Activated T-helper 1 cell treated with anti-CD3 and anti-CD28 coated beads, Interleukin-12 subunit alpha, Interleukin-12 subunit beta, Interleukin-2, Interleukin-4 antibody, amounts not matched to agents 30 ng/mL and 10 ng/mL and 1 ng/mL, durations not matched to agents 14 hours and 24 hours and 36 hours (primary cell): ENCODE measurements at regions of chr22 and their contacts with region 1.

Region 1: GRCh38 chr22:21001560-21002325 is at the start of gene THAP7:
- DNase-seq: peak; percentile 92
- H3K4me3 Mint-ChIP-seq: peak within 1 kb of the TSS; percentile 89
- H3K27ac Mint-ChIP-seq: peak within 1 kb of the TSS; percentile 99
- H3K4me1 Mint-ChIP-seq: peaks cover 8% of the 10 kb centered on the region
- H3K27me3 Mint-ChIP-seq: no peaks in the 10 kb centered on the region
- total RNA-seq, gene THAP7: 35.1 and 36.8 TPM in 2 replicates

Region 2: DNA sequence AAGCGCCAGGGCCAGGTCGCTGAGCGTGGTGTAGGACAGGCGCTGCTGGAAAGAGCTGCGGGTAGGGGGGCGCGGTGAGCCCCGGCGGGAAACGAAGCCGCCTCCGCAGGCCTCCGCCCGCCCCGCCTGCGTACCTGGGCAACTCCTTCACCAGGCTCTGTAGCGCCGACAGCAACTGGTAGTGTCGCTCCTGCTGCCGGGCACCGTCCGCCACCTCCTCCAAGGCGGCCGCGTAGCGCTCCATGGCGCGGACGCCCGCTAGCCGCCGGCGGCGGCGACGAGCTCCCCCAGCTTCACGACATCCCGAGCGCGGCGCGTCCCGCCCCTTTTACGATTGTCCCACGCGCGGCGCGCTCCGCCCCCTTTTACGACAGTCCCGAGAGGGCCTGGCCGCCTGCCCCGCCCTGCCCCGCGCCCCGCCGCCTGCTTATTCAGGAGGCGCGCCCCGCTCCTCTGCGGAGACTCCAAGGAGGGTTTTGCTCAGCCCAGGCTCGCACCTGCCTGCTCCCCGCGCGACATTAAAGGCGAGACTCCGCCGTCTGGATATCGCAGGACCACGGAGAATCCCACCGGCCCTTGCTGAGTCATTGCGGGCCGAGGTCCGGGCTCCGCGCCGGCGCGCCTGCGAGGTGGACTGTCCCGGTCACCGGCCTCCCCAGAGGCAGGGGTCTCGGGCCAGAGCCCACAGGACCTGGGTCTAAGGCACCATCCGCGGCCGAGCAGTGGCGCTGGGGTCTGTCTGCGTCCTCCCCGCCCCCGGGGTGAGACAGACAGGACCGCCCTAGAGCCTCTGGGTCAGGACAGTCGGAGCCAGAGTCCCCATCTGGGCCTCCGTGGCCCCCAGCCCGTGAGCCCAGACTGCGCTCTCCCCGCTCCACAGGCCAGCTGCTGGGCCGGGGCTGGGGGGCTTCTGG is 681.7 kb before region 1 on chr22 and contains the start of gene DGCR6L:
- intact Hi-C with region 1: loop called (anchors 5 kb)
- DNase-seq: peak; percentile 97
- H3K4me3 Mint-ChIP-seq: peak within 1 kb of the TSS; percentile 92
- H3K27ac Mint-ChIP-seq: peak within 1 kb of the TSS; percentile 86
- H3K4me1 Mint-ChIP-seq: peaks cover 62% of the 10 kb centered on the region
- H3K27me3 Mint-ChIP-seq: no peaks in the 10 kb centered on the region
- total RNA-seq, gene DGCR6L: 35.5 and 40.6 TPM in 2 replicates

Region 3: DNA sequence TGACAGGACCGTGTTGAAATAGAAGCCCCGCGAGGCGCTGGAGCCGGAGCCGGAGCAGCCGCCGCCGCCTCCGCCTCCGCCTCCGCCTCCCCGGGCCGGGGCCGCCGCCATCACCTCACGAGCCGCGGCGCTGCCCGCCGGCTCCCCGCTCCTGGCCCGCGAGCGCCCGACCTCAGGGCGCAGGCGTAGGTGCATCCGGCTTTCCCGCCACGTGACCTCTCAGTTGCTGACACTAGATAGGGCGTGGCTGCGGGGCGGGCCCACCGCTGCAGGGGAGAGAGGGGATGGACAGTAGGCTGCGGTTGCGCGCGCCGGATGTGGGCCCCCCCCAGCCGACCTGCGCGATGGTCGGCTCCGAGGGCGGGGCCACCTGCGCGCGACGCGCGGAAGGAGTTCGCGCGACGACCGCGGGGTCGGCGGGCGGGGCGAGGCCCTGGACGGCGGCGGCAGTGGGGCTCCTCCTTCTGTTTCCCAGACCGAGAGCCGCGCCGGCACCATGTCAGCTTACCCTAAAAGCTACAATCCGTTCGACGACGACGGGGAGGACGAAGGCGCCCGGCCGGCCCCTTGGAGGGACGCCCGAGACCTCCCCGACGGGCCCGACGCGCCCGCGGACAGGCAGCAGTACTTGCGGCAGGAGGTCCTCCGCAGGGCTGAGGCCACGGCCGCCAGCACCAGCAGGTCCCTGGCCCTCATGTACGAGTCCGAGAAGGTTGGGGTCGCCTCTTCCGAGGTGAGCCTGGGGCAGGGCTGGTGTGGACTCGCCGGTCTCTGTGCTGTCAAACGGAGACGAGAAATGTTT is 142.9 kb before region 1 on chr22 and contains the starts of genes PI4KA and SNAP29:
- intact Hi-C with region 1: loop called (anchors 1 kb)
- DNase-seq: peak; percentile 97
- H3K4me3 Mint-ChIP-seq: peak within 1 kb of the TSS; percentile 85
- H3K27ac Mint-ChIP-seq: peak within 1 kb of the TSS; percentile 88
- H3K4me1 Mint-ChIP-seq: peaks cover 51% of the 10 kb centered on the region
- H3K27me3 Mint-ChIP-seq: peaks cover 2% of the 10 kb centered on the region
- total RNA-seq, gene PI4KA: 80.4 and 84.7 TPM in 2 replicates
- total RNA-seq, gene SNAP29: 24.6 and 27.7 TPM in 2 replicates

Region 4: DNA sequence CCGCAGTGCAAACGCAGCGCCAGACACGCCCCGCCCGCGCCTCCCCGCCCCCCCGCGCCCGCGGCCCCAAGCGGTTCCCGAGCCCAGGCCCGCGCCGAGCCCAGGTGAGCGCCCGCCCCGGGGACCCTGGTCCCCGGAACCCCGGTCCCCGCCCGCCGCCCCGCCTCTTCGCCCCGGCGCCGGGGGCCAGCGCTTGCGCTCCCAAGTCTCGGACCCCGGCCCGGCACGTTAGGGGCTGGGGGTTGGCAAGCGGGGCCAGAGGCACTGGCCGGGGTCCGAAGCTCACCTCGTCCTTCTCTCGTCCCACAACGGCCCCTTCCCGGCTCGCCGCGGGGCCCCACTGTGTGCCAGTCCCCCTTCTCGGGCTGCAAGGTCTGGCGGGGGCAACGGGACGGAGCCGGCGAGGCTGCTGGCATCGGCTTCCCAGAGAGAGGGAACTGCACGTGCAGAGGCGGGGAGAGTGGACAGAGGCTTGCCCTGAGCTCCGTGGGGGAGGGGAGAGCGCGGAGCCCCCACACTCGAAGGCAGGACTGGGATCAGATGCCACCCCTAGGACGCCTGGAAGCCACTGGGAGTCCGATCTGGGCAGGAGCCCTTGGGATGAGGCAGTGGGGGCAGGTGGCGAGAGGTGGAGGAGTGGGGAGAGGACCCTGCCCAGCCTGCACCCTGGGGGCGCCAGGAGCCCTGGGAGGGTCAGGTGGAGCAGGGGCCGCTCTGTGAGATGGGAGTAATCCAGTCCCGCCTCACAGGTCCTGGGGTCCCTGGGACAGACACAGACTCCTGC is 36.4 kb before region 1 on chr22:
- intact Hi-C with region 1: loop called (anchors 5 kb)
- DNase-seq: no peak
- H3K4me3 Mint-ChIP-seq: no peak overlapping the region
- H3K27ac Mint-ChIP-seq: no peak overlapping the region
- H3K4me1 Mint-ChIP-seq: peaks cover 11% of the 10 kb centered on the region
- H3K27me3 Mint-ChIP-seq: peaks cover 22% of the 10 kb centered on the region

Region 5: GRCh38 chr22:21014202-21014725 is 12.5 kb after region 1 on chr22:
- intact Hi-C with region 1: loop called (anchors 1 kb)
- DNase-seq: peak; percentile 75
- H3K4me3 Mint-ChIP-seq: peak overlapping the region; percentile 67
- H3K27ac Mint-ChIP-seq: peak overlapping the region; percentile 63
- H3K4me1 Mint-ChIP-seq: peaks cover 15% of the 10 kb centered on the region
- H3K27me3 Mint-ChIP-seq: peaks cover 5% of the 10 kb centered on the region